ENCODE measurements at regions of chr11 and their contacts with region 1.

Region 1: GRCh38 chr11:124122123-124122522 is 6.9 kb downstream of the VWA5A start:
- DNase-seq: no peak
- ATAC-seq: no peak
- H3K4me3 ChIP-seq: no peak overlapping the region
- H3K4me3 Mint-ChIP-seq: no peak overlapping the region
- H3K27ac ChIP-seq: no peak overlapping the region
- H3K27ac Mint-ChIP-seq: peak overlapping the region in 1 of 2 donors; percentile 54
- H3K4me1 ChIP-seq: no peaks in the 10 kb centered on the region
- H3K4me1 Mint-ChIP-seq: peaks cover 8 to 12% (median 10%) of the 10 kb centered on the region in 3 donors
- H3K27me3 ChIP-seq: no peaks in the 10 kb centered on the region
- H3K27me3 Mint-ChIP-seq: no peaks in the 10 kb centered on the region

Region 2: GRCh38 chr11:124090996-124091395 is 31.1 kb before region 1 on chr11:
- CTCF ChIA-PET with region 1: interaction called in 1 of 2 experiments, 14 read pairs
- POLR2A ChIA-PET with region 1: no interaction called
- DNase-seq: no peak
- ATAC-seq: no peak
- H3K4me3 ChIP-seq: no peak overlapping the region
- H3K4me3 Mint-ChIP-seq: no peak overlapping the region
- H3K27ac ChIP-seq: no peak overlapping the region
- H3K27ac Mint-ChIP-seq: no peak overlapping the region
- H3K4me1 ChIP-seq: no peaks in the 10 kb centered on the region
- H3K4me1 Mint-ChIP-seq: no peaks in the 10 kb centered on the region
- H3K27me3 ChIP-seq: peaks cover 0 to 2% of the 10 kb centered on the region in 2 experiments
- H3K27me3 Mint-ChIP-seq: peaks cover 24 to 26% of the 10 kb centered on the region in 2 donors